ENCODE measurements at regions of chr4 and their contacts with region 1.

Region 1: GRCh38 chr4:40621592-40622512 is 7.8 kb downstream of the RBM47 start:
- DNase-seq: peak; percentile 75
- ATAC-seq: peak; percentile 88
- H3K4me3 ChIP-seq: peak overlapping the region in 1 of 5 experiments; percentile 5
- H3K4me3 Mint-ChIP-seq: peak overlapping the region; percentile 47
- H3K27ac ChIP-seq: no peak overlapping the region
- H3K27ac Mint-ChIP-seq: peak overlapping the region; percentile 62
- H3K4me1 ChIP-seq: peaks cover 12 to 17% of the 10 kb centered on the region in 2 donors
- H3K4me1 Mint-ChIP-seq: peaks cover 14% of the 10 kb centered on the region
- H3K27me3 ChIP-seq: no peaks in the 10 kb centered on the region
- H3K27me3 Mint-ChIP-seq: peaks cover 3% of the 10 kb centered on the region
- CTCF ChIP-seq: no peak

Region 2: DNA sequence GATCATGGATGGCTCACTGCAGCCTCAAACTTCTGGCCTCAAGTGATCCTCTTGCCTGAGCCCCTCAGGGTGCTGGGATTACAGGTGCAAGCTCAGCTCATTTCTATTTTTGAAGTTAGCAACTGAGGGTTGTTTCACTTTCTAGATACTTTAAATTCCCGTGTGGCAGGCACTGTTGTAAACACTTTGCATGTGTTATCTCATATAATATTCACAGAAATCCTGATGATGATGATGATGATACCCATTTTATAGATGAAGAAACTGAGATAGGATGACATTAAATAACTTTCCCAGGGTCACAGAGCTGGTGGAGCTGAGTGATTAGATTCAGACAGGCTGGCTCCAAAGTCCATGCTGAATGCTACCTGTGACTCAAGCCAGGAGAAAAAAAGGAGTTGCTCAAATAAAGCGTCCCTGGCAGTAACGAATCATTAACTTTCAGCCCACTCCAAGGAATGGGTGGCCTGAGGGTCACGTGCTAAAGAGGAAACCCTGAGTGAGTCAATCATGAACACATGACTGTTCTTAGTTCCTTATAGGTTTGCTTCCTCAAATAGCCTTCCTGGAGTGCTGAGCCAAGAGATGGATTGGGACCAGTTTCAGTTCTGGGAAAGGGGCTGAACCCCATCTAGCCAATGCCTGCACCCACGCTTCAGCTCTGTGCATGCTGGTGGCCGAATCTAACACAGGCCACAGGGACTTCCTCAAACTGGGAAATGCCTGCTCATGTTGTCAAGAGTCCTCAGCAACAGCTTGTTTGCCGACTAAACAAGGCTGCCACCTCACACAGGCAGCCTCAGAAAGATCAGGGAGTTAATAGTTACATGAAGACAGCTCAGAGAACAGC is 45.0 kb before region 1 on chr4:
- CTCF ChIA-PET with region 1: no interaction called
- POLR2A ChIA-PET with region 1: no interaction called
- intact Hi-C with region 1: loop called (anchors 5 kb)
- DNase-seq: peak; percentile 77
- ATAC-seq: peak; percentile 75
- H3K4me3 ChIP-seq: peak overlapping the region in 3 of 5 experiments; percentile 13 to 48 (median 20)
- H3K4me3 Mint-ChIP-seq: peak overlapping the region; percentile 74
- H3K27ac ChIP-seq: peak overlapping the region; percentile 66 to 79
- H3K27ac Mint-ChIP-seq: peak overlapping the region; percentile 92
- H3K4me1 ChIP-seq: peaks cover 37 to 54% of the 10 kb centered on the region in 2 donors
- H3K4me1 Mint-ChIP-seq: peaks cover 51% of the 10 kb centered on the region
- H3K27me3 ChIP-seq: no peaks in the 10 kb centered on the region
- H3K27me3 Mint-ChIP-seq: no peaks in the 10 kb centered on the region
- CTCF ChIP-seq: no peak

Region 3: DNA sequence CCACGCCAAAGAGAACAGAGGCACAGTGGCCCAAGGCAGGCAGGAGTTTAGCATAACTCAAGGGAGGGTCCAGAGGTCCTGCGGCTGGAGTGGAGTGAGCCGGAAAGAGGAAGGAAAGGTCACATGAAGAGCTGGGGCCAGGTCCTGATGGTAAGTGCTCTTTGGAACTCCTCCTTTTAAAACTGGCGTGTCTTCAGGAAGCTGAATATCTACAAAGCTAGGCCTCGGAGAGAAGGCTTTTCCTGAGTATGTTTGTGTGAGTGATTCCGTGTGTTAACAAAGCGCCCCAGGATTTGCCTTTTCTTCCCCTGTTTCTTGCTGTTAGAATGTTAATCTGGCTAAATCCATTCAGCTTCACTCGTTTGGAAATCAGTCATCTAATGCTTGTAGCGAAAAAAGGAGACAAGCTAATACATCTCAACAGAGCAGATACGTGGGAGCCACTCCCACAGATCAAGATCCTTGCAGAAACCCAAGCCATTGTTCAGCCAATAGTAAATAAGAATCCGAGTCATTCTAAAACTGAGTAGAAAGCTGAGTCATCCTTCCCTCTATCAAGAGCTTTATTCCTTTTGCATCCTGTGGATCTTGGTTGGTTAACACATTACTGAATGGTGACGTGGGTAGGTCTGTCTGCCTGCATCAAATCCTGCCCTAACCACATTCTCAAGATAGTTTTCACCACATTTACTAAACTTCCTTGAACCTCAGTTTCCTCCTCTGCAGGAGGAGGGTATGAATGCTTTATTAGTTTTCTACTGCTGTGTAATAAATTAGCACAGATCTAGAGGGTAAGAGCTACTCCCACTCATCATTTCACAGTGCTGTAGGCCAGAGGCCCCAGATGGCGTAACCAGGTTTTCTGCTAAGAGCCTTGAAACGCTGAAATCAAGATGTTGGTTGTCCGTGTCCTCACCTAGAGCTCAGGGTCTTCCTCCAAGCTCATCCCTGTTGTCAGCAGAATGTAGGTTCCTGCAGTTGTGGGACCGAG is 51.0 kb after region 1 on chr4:
- CTCF ChIA-PET with region 1: no interaction called
- POLR2A ChIA-PET with region 1: no interaction called
- intact Hi-C with region 1: no loop called
- DNase-seq: no peak
- ATAC-seq: no peak
- H3K4me3 ChIP-seq: no peak overlapping the region
- H3K4me3 Mint-ChIP-seq: no peak overlapping the region
- H3K27ac ChIP-seq: no peak overlapping the region
- H3K27ac Mint-ChIP-seq: no peak overlapping the region
- H3K4me1 ChIP-seq: no peaks in the 10 kb centered on the region
- H3K4me1 Mint-ChIP-seq: no peaks in the 10 kb centered on the region
- H3K27me3 ChIP-seq: no peaks in the 10 kb centered on the region
- H3K27me3 Mint-ChIP-seq: no peaks in the 10 kb centered on the region
- CTCF ChIP-seq: no peak

Measured in B cell (primary cell).